ENCODE measurements at regions of chrX and their contacts with region 1.

Region 1: DNA sequence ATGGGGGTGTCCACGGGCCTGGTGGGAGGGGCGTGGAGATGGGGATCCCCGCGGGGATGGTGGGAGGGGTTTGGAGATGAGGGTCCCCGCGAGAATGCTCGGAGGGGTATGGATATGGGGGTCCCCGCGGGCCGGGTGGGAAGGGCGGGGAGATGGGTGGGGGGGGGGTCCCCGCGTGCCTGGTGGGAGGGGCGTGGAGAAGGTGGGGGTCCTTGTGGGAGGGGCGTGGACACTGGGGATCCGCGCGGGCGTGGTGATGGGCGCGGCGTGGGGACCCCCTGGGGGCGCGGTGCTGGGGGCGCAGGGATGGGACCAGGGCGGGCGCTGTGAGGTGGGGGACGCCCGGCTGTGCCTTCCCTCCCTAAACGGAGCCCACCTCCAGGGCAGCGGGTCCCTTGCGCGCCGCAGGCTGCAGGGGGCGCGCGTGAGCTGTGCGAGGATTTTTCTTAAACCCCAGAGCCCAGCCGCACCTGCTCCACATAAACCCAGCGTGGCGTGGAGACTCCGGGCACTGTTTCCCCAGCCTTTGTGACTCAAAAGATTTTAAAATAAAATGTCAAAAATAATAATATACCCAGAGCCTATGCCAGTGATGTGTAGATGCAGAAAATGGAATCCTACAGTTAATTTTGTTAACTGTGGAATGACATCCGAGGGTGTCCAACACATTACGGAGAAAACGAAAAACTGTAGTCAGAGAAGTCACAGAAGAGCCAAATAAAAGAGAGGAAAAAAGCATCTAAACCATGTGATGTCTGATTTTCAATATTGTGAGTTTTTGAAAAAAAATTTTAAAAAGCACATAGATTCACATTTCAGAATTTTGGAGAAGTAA is 1.5 kb upstream of the ASMTL start:
- DNase-seq: peak; percentile 93

Region 2: DNA sequence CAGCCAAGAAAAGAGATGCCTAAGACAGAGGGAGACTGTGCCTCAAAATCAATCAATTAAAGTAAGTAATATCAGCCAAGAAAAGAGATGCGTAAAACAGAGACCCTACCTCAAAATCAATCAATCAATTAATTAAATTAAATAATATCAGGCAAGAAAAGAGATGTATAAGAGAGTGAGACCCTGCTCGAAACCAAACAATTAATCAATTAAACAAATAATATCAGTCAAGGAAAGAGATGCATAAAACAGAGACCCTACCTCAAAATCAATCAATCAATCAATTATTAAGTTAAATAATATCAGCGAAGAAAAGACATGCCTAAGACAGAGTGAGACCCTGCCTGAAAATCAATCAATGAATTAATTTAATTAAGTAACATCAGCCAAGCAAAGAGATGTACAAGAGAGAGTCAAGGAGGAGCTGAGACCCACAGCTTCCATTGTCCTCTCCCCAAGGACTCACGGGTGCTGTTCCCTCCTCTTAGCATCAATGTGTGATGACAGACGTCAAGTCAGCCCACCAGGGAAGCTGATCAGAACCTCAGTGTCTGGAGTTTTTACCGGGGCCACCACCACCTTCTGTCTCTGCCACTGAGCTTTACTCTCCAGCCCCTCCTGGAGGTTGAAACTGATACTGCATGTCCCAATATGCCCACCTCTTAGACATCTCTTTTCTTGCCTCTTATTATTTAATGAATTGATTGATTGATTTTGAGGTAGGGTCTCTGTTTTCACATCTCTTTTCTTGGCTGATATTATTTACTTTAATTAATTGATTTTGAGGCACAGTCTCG is 126.8 kb after region 1 on chrX:
- intact Hi-C with region 1: no loop called
- DNase-seq: no peak

Region 3: DNA sequence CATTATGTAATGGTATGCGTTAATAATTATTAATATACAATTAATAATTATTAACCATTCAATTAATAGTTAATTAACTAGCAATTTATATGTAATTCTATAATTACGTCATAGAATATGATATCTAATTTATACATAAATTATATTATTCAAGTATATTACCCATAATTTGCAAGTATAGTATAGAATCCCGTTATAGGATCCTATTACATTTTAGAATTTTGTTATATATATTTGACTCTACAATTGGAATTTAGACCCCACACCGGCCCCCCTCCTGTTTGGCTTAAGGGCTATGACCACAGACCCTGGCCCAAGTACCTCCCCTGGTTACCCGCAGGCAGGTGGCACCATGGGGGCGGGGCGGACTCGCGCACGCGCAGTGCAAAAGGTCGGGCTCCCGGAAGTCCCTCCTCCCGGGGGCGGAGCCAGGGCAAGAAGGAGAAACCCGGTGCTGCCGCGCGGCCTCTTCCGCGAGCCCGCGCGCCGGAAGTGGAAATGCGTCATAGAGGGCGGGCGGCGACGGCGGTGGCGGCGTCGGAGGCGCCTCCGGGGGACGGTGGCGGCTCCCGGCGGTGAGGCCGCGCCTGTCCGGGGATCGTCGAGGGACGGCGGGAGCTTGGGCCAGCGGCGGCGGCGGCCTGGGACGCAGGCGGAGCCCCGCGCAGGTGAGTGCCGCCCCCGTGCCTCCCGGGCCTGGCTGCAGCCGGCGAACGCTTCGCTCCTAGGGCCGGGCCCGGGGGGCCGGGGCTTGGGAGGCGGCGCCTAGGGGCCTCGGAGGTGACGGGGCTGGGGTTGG is 137.1 kb after region 1 on chrX and contains the start of gene AKAP17A:
- intact Hi-C with region 1: loop called (anchors 5 kb)
- DNase-seq: peak; percentile 98
- total RNA-seq, gene AKAP17A: 19.9 TPM

Region 4: GRCh38 chrX:1767025-1767424 is 312.9 kb after region 1 on chrX:
- intact Hi-C with region 1: no loop called
- DNase-seq: no peak

Region 5: GRCh38 chrX:2614911-2615310 is 1160.7 kb after region 1 on chrX:
- intact Hi-C with region 1: loop called (anchors 10 kb)
- DNase-seq: no peak